Naive thymus-derived CD4-positive, alpha-beta T cell (primary cell): ENCODE measurements at regions of chr6 and their contacts with region 1.

Region 1: GRCh38 chr6:75208298-75209183 is 2.7 kb upstream of the COL12A1 start:
- DNase-seq: peak; percentile 59 to 80 (median 74)
- ATAC-seq: peak; percentile 90
- H3K4me3 ChIP-seq: peak overlapping the region; percentile 47
- H3K4me3 Mint-ChIP-seq: peak overlapping the region; percentile 58 to 92 (median 80)
- H3K27ac ChIP-seq: no peak overlapping the region
- H3K27ac Mint-ChIP-seq: peak overlapping the region in 3 of 9 donors; percentile 32 to 60 (median 38)
- H3K4me1 ChIP-seq: peaks cover 24 to 45% of the 10 kb centered on the region in 2 donors
- H3K4me1 Mint-ChIP-seq: peaks cover 43 to 59% (median 53%) of the 10 kb centered on the region in 7 donors
- H3K27me3 ChIP-seq: peaks cover 4 to 18% of the 10 kb centered on the region in 2 donors
- H3K27me3 Mint-ChIP-seq: peaks cover 72 to 78% (median 75%) of the 10 kb centered on the region in 5 donors

Region 2: DNA sequence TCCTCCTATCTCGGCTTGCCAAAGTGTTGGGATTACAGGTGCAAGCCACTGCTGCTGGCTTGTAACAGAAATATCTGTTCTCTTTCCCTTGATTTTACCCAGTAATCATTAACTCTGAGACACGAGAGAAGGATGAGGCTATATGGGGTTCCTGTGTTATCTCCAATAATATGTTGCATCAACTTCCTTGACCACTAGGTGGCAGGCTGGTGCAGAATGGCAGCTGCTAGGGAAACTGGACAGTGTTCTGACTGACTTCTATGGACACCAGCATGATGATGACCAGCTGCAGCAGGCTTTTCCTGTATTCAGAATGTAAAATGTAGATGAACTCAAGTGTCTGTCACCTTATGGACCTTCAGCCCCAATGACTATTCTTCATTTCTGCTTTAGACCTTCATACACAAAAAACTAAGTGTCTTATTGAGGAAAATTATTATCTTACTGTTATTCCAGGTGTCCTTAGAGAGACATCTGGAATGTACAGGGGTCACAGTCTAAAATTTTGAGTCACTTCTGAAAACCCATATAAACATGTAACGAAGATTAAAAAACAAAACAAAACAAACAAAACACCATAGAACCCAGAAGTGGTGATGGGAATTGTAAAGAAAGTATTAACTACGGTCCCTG is 1533.0 kb before region 1 on chr6:
- CTCF ChIA-PET with region 1: interaction called, 7 read pairs
- POLR2A ChIA-PET with region 1: no interaction called
- intact Hi-C with region 1: loop called (anchors 1 to 5 kb)
- DNase-seq: peak; percentile 31 to 74 (median 59)
- ATAC-seq: peak; percentile 92
- H3K4me3 ChIP-seq: no peak overlapping the region
- H3K4me3 Mint-ChIP-seq: no peak overlapping the region
- H3K27ac ChIP-seq: no peak overlapping the region
- H3K27ac Mint-ChIP-seq: no peak overlapping the region
- H3K4me1 ChIP-seq: no peaks in the 10 kb centered on the region
- H3K4me1 Mint-ChIP-seq: peaks cover 0 to 4% (median 0%) of the 10 kb centered on the region in 7 donors
- H3K27me3 ChIP-seq: no peaks in the 10 kb centered on the region
- H3K27me3 Mint-ChIP-seq: peaks cover 4 to 23% (median 21%) of the 10 kb centered on the region in 5 donors

Region 3: DNA sequence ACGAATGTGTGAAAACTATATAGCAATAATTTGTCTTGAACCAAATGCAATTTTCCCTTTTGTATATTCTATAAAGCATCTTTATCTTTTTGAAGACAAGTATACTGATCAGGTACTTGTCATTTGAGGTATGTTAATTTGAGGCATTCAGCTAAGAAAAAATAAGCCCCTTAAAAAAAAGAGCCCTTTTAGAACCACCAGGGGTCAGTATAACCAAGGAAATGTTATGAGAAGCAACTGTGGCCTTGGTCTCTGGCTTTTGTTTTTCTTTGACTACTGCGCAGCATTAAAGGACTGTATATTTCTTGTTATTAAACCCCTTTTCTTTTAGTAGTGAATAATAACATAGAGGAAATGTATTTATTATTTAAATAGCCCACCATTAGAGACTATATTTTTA is 1469.4 kb before region 1 on chr6:
- CTCF ChIA-PET with region 1: interaction called, 90 read pairs
- POLR2A ChIA-PET with region 1: no interaction called
- intact Hi-C with region 1: loop called (anchors 1 kb)
- DNase-seq: peak in 7 of 9 donors; percentile 31 to 69 (median 57)
- ATAC-seq: peak; percentile 76
- H3K4me3 ChIP-seq: no peak overlapping the region
- H3K4me3 Mint-ChIP-seq: no peak overlapping the region
- H3K27ac ChIP-seq: no peak overlapping the region
- H3K27ac Mint-ChIP-seq: no peak overlapping the region
- H3K4me1 ChIP-seq: no peaks in the 10 kb centered on the region
- H3K4me1 Mint-ChIP-seq: peaks cover 0 to 4% (median 0%) of the 10 kb centered on the region in 7 donors
- H3K27me3 ChIP-seq: no peaks in the 10 kb centered on the region
- H3K27me3 Mint-ChIP-seq: peaks cover 0 to 4% (median 0%) of the 10 kb centered on the region in 5 donors

Region 4: GRCh38 chr6:73854998-73855718 is 1353.4 kb before region 1 on chr6:
- CTCF ChIA-PET with region 1: interaction called, 8 read pairs
- POLR2A ChIA-PET with region 1: no interaction called
- intact Hi-C with region 1: loop called (anchors 1 kb)
- DNase-seq: peak in 6 of 9 donors; percentile 2 to 43 (median 26)
- ATAC-seq: peak; percentile 66
- H3K4me3 ChIP-seq: no peak overlapping the region
- H3K4me3 Mint-ChIP-seq: no peak overlapping the region
- H3K27ac ChIP-seq: no peak overlapping the region
- H3K27ac Mint-ChIP-seq: no peak overlapping the region
- H3K4me1 ChIP-seq: no peaks in the 10 kb centered on the region
- H3K4me1 Mint-ChIP-seq: peaks cover 0 to 2% (median 0%) of the 10 kb centered on the region in 7 donors
- H3K27me3 ChIP-seq: no peaks in the 10 kb centered on the region
- H3K27me3 Mint-ChIP-seq: peaks cover 0 to under 1% (median 0%) of the 10 kb centered on the region in 5 donors

Region 5: DNA sequence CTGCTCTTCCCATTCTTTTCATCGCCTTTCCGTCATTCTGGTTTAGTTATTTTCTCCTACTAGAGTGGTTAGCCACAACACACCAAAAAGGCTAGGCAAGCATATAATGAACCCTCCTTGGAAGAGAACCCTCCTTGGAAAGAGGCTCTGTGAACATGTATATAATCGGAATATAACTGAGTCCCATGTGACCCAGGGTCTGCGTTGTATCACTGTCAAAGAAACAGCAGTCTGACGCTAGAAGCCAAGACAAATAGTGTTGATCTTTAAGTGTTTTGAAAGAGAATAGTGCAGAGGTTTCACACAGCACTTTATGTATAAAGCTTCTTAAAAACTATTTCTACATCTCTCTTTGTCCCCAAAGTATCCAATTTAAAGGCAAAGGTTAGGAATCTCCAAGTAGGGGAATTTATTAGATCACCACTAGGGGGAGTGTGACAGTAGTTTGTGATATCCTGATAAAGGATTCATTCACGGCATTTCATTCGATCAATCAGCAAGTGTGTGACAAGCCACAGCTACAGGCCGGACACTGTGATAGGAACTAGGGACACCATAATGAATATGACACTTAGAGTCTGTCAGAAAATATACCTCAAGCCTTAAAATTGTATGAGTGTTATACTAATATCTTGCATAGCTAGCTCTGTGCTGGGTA is 1117.3 kb before region 1 on chr6:
- CTCF ChIA-PET with region 1: interaction called, 18 read pairs
- POLR2A ChIA-PET with region 1: no interaction called
- intact Hi-C with region 1: loop called in 1 of 2 experiments (anchors 1 kb)
- DNase-seq: peak in 4 of 9 donors; percentile 2 to 14 (median 4)
- ATAC-seq: no peak
- H3K4me3 ChIP-seq: no peak overlapping the region
- H3K4me3 Mint-ChIP-seq: no peak overlapping the region
- H3K27ac ChIP-seq: no peak overlapping the region
- H3K27ac Mint-ChIP-seq: no peak overlapping the region
- H3K4me1 ChIP-seq: no peaks in the 10 kb centered on the region
- H3K4me1 Mint-ChIP-seq: no peaks in the 10 kb centered on the region
- H3K27me3 ChIP-seq: peaks cover 0 to 4% of the 10 kb centered on the region in 2 donors
- H3K27me3 Mint-ChIP-seq: peaks cover 0 to 10% (median 5%) of the 10 kb centered on the region in 5 donors

Region 6: DNA sequence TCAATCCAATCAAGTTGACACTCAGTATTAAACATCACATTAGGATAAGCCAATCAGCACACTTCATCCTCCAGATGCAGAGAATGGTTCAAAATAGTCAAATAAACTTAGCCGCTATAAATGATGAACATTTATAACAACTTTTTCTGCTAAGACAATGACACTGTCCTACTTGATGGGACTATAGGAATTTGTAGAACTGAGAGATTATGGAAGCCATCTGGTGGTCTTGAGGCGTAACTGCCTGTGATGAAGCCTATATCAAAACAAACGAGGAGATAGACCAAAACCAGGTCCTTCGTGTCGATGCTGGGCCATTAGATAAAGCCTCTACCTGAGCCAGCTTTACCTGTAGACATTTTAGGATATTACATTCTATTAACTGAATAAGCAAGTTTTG is 633.7 kb before region 1 on chr6:
- CTCF ChIA-PET with region 1: no interaction called
- POLR2A ChIA-PET with region 1: no interaction called
- intact Hi-C with region 1: loop called in 1 of 2 experiments (anchors 10 kb)
- DNase-seq: no peak
- ATAC-seq: no peak
- H3K4me3 ChIP-seq: no peak overlapping the region
- H3K4me3 Mint-ChIP-seq: no peak overlapping the region
- H3K27ac ChIP-seq: no peak overlapping the region
- H3K27ac Mint-ChIP-seq: no peak overlapping the region
- H3K4me1 ChIP-seq: no peaks in the 10 kb centered on the region
- H3K4me1 Mint-ChIP-seq: peaks cover 0 to 3% (median 0%) of the 10 kb centered on the region in 7 donors
- H3K27me3 ChIP-seq: no peaks in the 10 kb centered on the region
- H3K27me3 Mint-ChIP-seq: peaks cover 0 to 4% (median 2%) of the 10 kb centered on the region in 5 donors

Region 7: DNA sequence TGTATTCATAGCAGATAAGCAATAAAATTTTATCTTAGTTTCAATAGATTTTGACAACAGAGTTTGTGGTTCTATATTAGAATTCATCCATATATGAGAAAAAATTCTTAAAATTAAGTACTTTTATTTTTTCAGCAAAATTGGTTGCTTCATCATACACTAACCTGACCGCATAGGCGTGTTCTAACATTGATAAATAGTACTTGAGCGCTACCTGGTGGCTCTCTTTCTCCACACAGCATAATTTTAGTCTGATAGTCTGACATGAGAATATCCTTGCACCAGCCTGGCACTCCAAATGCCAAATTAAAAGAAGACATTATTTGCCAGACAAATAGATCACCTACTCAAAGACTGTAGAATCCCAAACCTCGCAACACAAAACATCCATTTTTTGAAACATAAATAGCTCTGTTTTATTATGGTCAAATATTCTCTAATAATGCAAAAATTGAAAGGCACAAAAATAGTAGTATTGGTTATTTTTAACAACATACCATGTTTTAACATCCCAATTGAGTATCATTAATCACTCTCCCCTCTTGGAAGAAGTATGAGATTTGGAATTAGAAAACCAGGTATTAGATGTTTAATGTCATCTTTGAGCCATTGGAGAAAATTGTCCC is 318.1 kb after region 1 on chr6:
- CTCF ChIA-PET with region 1: no interaction called
- POLR2A ChIA-PET with region 1: no interaction called
- intact Hi-C with region 1: loop called (anchors 1 to 2 kb)
- DNase-seq: peak in 8 of 9 donors; percentile 30 to 65 (median 57)
- ATAC-seq: peak; percentile 91
- H3K4me3 ChIP-seq: no peak overlapping the region
- H3K4me3 Mint-ChIP-seq: no peak overlapping the region
- H3K27ac ChIP-seq: no peak overlapping the region
- H3K27ac Mint-ChIP-seq: no peak overlapping the region
- H3K4me1 ChIP-seq: no peaks in the 10 kb centered on the region
- H3K4me1 Mint-ChIP-seq: no peaks in the 10 kb centered on the region
- H3K27me3 ChIP-seq: peaks cover 0 to 3% of the 10 kb centered on the region in 2 donors
- H3K27me3 Mint-ChIP-seq: peaks cover 15 to 44% (median 27%) of the 10 kb centered on the region in 5 donors